Vagina (tissue), 2 donors: ENCODE measurements at regions of chr7 and their contacts with region 1.

Region 1: GRCh38 chr7:158976849-158977593 is 120.7 kb downstream of the DYNC2I1 start:
- DNase-seq: no peak
- H3K4me3 ChIP-seq: peak overlapping the region; percentile 25 to 34
- H3K27ac ChIP-seq: peak overlapping the region; percentile 54
- H3K4me1 ChIP-seq: peaks cover 28% of the 10 kb centered on the region
- H3K27me3 ChIP-seq: no peaks in the 10 kb centered on the region
- CTCF ChIP-seq: peak; percentile 45 to 87 (median 76)
- POLR2A ChIP-seq: no peak

Region 2: GRCh38 chr7:158695726-158696452 is 281.1 kb before region 1 on chr7:
- intact Hi-C with region 1: loop called (anchors 5 kb)
- DNase-seq: no peak
- H3K4me3 ChIP-seq: no peak overlapping the region
- H3K27ac ChIP-seq: no peak overlapping the region
- H3K4me1 ChIP-seq: peaks cover 6% of the 10 kb centered on the region
- H3K27me3 ChIP-seq: no peaks in the 10 kb centered on the region
- CTCF ChIP-seq: peak; percentile 35 to 53 (median 42)
- POLR2A ChIP-seq: no peak